ENCODE measurements at regions of chr1 and their contacts with region 1.

Region 1: DNA sequence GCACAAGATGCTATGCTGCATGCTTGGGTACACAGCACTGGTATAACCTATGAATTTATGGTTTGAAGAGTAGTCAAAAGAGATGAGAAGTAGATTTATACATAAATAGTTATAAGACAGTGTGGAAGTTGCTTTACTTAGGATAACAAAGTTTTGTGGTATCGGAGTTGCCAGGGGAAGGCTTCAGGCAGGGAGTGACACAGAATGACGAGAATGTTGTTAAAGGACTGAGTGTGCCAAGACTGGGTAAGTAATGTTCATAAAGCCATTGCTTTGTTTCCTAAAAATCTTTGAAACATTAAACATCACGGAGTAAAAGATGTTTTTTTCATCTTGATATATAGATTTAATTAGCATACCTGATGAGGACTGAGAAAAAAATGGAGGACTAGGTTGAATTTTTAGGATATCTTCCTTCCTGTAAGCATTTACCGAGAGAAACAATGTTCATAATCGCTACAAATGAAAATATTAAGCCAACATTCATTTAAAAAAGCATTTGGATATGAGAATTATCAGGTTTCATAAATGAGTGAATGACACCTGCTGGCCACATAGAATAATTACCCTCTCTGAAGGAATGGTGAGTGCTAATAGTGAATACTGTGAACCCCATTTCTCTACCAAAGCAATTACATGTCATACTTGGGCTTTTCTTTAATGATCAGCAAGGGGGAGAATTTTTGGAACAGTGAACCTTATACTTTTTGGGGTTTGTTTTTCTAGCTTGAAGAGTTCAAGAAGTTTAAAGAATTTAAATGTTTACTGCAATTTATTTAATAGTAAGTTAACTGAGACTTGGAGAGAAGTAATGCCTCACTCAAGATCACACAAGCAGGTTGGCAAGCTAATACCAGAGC is 28.4 kb downstream of the EXTL2 start:
- ATAC-seq: peak in 4 of 8 experiments; percentile 42 to 55 (median 52)
- H3K4me3 ChIP-seq: no peak overlapping the region
- H3K27ac ChIP-seq: no peak overlapping the region
- H3K4me1 ChIP-seq: peaks cover 0 to 11% of the 10 kb centered on the region in 2 donors

Region 2: DNA sequence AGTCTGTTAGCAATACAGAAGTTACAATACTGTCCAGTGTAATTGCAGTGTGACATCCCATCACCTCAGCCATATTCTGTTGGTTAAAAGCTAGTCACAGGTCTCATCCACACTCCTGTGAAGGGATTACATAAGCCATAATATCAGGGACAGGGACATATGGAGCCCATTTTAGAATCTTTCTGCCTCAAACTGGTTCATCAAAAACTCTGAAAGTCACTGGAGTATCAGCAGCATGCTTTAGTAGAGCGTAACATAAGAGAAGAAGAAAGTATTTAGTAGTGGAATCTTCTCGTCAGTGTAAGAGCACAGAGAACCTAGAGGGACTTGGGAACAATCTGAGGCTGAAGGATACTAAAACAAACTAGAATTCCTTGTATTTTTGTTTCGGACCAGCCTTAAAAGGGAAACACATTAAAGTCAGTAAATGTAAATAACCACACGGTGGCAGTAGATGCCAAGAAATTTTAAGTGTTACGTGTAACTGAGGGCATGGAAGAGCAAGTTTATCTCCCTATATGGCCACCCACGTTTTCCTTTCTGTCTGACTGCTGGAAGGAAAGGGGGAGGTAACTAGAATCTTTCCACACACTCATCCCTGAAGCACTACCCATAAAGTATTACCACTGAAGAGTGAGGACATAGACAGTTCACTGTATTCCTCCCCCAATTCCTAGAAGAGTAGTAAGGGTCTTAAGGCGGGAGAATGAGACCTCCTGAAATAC is 1057.7 kb before region 1 on chr1:
- in situ Hi-C with region 1: loop called in 6 of 9 experiments (anchors 10 to 25 kb)
- ATAC-seq: peak; percentile 89 to 98 (median 96)
- H3K4me3 ChIP-seq: no peak overlapping the region
- H3K27ac ChIP-seq: no peak overlapping the region
- H3K4me1 ChIP-seq: peaks cover 3 to 7% of the 10 kb centered on the region in 2 donors

Region 3: DNA sequence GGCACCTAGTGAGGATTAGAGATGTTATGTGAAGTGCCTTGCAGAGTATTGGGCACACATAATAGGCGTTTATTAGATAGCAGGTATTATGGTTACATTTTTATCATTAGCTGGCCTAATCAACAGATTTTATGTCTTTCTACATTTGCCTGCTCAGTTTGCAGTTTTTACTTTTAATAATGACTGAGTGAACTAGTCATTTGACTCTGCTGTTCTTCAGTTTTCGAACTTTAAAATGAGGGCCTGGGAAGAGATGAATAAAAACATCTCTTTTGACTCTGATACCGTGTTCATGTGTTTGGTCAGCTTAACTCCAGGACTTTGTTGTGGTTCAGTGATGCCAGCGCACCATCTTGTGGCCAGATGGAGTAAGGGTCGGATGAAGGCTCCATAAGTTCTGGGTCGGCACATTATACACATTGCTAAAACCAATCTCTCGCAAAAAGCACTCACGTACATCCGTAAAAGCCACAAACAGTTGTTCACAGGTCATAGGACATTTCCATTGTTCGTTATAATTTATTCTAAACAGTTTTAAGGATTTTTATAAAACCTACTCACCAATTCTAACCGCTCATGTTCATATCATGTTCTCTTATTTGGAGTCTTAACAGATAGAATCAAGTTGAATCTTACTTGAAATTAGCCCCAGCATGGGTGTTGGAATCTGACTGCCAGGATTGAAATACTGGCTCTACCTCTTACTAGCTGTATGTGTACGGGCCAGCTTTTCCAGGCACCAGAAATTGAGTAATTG is 406.7 kb before region 1 on chr1:
- in situ Hi-C with region 1: loop called in 5 of 9 experiments (anchors 10 to 25 kb)
- ATAC-seq: peak; percentile 85 to 98 (median 86)
- H3K4me3 ChIP-seq: no peak overlapping the region
- H3K27ac ChIP-seq: no peak overlapping the region
- H3K4me1 ChIP-seq: peaks cover 18 to 21% of the 10 kb centered on the region in 2 donors

Region 4: DNA sequence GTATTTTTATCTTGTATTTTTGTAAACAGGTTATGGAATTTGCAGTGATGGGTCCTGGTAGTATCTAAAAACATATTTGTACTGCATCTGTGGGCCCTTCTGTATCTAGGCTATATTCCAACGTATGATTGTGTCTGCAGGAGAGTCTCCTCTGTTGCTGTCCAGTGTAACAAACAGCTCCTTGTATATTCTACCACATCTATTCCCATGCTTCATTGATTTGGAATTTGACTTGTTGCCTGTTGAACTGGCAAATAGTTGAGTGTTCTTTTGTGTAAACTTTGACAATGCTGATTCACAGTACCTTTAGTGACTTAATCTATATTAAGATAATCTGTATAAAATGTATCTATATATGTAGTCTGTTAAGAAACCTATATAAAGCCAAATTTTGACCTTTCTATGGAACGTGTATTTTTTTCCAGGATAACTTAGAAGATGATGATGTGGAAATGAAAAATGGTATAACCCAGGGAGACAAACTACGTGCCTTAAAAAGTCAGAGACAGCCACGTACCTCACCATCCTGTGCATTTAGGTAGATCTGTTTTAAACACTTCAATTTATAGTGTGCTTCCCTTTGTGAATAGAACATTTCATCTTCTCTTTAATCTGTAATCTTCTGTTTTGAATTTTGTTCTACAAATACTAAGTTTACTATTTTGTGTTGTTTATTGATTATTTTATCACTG is 371.7 kb before region 1 on chr1:
- in situ Hi-C with region 1: loop called in 3 of 9 experiments (anchors 25 kb)
- ATAC-seq: no peak
- H3K4me3 ChIP-seq: no peak overlapping the region
- H3K27ac ChIP-seq: no peak overlapping the region
- H3K4me1 ChIP-seq: no peaks in the 10 kb centered on the region

Region 5: GRCh38 chr1:100606438-100606837 is 259.8 kb before region 1 on chr1:
- in situ Hi-C with region 1: loop called in 4 of 9 experiments (anchors 5 to 25 kb)
- ATAC-seq: peak in 4 of 8 experiments; percentile 71 to 87 (median 80)
- H3K4me3 ChIP-seq: no peak overlapping the region
- H3K27ac ChIP-seq: no peak overlapping the region
- H3K4me1 ChIP-seq: no peaks in the 10 kb centered on the region

Region 6: DNA sequence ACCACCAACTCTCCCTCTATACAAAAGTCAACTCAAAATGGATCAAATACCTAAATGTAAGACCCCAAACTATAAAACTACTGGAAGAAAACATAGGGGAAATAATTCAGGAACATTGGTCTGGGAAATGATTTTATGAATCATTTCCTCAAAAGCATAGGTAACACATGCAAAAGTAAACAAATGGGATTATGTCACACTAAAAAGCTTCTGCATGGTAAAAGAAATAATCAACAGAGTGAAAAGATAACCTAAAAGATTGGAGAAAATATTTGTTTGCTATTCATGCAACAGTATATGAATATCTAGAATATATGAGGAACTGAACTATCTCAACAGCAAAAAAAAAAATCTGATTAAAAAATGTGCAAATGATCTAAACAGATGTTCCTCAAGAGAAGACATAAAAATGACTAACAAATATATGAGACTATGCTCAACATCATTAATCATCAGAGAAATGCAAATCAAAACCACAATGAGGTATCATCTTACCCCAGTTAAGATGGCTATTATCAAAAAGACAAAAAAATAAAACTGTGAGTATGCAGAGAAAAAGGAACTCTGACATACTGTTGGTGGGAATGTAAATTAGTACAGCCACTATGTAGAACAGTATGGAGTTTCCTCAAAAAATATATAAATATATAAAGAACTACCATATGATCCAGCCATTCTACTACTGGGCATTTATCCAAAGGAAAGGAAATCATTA is 98.9 kb before region 1 on chr1:
- in situ Hi-C with region 1: loop called in 1 of 9 experiments (anchors 25 kb)
- ATAC-seq: peak in 3 of 8 experiments; percentile 58 to 95 (median 91)
- H3K4me3 ChIP-seq: no peak overlapping the region
- H3K27ac ChIP-seq: no peak overlapping the region
- H3K4me1 ChIP-seq: no peaks in the 10 kb centered on the region